Keratinocyte (primary cell): ENCODE measurements at regions of chr2 and their contacts with region 1.

Region 1: GRCh38 chr2:16739778-16740581 is 74.3 kb upstream of the CYRIA start:
- DNase-seq: no peak
- H3K4me3 ChIP-seq: no peak overlapping the region
- H3K27ac ChIP-seq: no peak overlapping the region
- H3K4me1 ChIP-seq: no peaks in the 10 kb centered on the region
- H3K27me3 ChIP-seq: no peaks in the 10 kb centered on the region
- CTCF ChIP-seq: no peak

Region 2: DNA sequence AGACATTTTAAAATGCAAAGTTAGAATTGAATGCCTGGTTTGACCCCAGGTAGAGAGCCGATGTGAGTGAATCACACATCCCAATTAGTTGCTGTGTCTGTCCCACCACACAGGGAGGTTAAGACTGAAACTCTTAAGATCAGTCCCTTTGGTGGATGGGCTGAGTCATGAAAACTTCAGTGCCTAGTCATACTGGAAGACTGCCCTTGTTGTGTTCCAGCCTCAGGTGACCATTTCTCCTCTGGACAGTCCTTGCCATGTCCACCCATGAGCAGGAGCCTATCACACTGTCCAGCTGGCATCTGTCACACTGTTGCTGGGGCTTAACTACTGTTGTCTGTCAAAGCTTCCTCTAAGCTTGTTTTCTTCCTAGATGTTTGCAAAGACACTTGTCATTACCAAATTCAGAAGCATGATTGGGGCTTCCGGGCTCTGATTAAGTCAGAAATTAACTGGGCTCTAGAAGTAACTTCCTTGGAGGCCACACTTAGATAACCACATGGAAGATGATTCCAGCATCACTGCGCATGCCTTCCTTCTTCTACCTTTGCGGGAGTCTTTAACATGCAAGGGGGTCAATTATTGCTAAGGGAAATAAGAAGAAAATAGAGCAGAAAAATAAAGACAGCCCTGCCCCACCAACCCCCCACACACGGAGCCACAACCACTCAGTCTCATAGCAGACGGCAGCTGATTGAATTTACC is 95.6 kb before region 1 on chr2:
- dilution Hi-C with region 1: loop called (anchors 5 kb)
- DNase-seq: no peak
- H3K4me3 ChIP-seq: no peak overlapping the region
- H3K27ac ChIP-seq: no peak overlapping the region
- H3K4me1 ChIP-seq: no peaks in the 10 kb centered on the region
- H3K27me3 ChIP-seq: no peaks in the 10 kb centered on the region
- CTCF ChIP-seq: no peak